ENCODE measurements at regions of chr12 and their contacts with region 1.

Region 1: GRCh38 chr12:116299658-116300328 is 22.3 kb upstream of the MED13L start:
- DNase-seq: no peak
- H3K4me3 ChIP-seq: no peak overlapping the region
- H3K27ac ChIP-seq: peak overlapping the region; percentile 38 to 79
- H3K4me1 ChIP-seq: no peaks in the 10 kb centered on the region
- H3K27me3 ChIP-seq: no peaks in the 10 kb centered on the region
- CTCF ChIP-seq: no peak
- POLR2A ChIP-seq: no peak

Region 2: GRCh38 chr12:116263844-116264243 is 35.9 kb before region 1 on chr12:
- intact Hi-C with region 1: loop called (anchors 2 kb)
- DNase-seq: no peak
- H3K4me3 ChIP-seq: no peak overlapping the region
- H3K27ac ChIP-seq: no peak overlapping the region
- H3K4me1 ChIP-seq: peaks cover 0 to 24% of the 10 kb centered on the region in 2 donors
- H3K27me3 ChIP-seq: no peaks in the 10 kb centered on the region
- CTCF ChIP-seq: no peak
- POLR2A ChIP-seq: no peak